Colonic mucosa (tissue), 4 donors: ENCODE measurements at regions of chr5 and their contacts with region 1.

Region 1: GRCh38 chr5:163505368-163506094 is at the start of gene MAT2B:
- DNase-seq: peak; percentile 96
- H3K4me3 ChIP-seq: peak within 1 kb of the TSS; percentile 78
- H3K27ac ChIP-seq: peak within 1 kb of the TSS; percentile 100
- H3K4me1 ChIP-seq: peaks cover 3% of the 10 kb centered on the region
- H3K27me3 ChIP-seq: no peaks in the 10 kb centered on the region
- CTCF ChIP-seq: peak; percentile 36
- total RNA-seq, gene MAT2B: 63.4 to 86.7 TPM

Region 2: DNA sequence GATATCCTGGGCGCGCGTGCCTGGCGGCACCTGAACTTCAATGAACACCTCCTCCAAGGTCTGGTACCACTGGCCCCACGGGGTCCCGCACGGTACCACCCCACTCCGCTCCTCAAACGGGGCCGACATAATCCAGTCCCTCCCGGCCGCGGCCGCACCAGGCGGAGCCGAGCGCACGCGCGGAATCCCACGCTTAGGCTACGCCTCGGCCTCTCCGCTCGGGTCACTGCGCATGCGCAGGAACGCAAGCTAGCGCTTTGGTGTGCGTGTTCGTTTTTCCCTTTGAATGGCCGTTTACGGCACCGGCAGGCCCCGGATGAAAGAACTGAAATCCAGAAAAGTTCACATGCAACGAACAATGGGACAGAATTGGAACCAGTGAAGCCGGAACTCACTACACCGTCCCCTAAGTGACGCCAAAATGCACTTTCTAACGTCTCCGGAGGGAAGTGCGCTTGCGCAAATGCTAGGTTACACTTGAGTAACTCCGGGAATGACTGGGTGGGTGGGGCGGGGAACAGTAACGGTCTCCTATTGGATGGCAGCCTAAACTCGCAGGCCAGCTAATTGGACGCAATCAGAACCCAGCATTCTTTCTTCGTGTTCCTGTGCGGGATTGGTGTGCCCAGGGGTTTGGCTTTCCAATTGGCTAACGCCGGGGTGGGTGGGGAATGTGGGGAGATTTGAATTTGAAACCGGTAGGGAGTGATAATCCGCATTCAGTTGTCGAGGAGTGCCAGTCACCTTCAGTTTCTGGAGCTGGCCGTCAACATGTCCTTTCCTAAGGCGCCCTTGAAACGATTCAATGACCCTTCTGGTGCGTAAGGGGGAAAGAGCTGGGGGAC is 45.4 kb before region 1 on chr5 and contains the starts of genes HMMR and NUDCD2:
- intact Hi-C with region 1: loop called (anchors 5 kb)
- DNase-seq: peak; percentile 97
- H3K4me3 ChIP-seq: peak within 1 kb of the TSS; percentile 68
- H3K27ac ChIP-seq: peak within 1 kb of the TSS; percentile 80
- H3K4me1 ChIP-seq: peaks cover 5% of the 10 kb centered on the region
- H3K27me3 ChIP-seq: no peaks in the 10 kb centered on the region
- CTCF ChIP-seq: no peak
- total RNA-seq, gene HMMR: 10.6 to 44.5 TPM
- total RNA-seq, gene NUDCD2: 24.6 to 32.9 TPM

Region 3: GRCh38 chr5:163846516-163846915 is 341.0 kb after region 1 on chr5:
- intact Hi-C with region 1: no loop called
- DNase-seq: no peak
- H3K4me3 ChIP-seq: no peak overlapping the region
- H3K27ac ChIP-seq: no peak overlapping the region
- H3K4me1 ChIP-seq: no peaks in the 10 kb centered on the region
- H3K27me3 ChIP-seq: no peaks in the 10 kb centered on the region
- CTCF ChIP-seq: no peak